K562 (cell line): ENCODE measurements at regions of chr11 and their contacts with region 1.

Region 1: DNA sequence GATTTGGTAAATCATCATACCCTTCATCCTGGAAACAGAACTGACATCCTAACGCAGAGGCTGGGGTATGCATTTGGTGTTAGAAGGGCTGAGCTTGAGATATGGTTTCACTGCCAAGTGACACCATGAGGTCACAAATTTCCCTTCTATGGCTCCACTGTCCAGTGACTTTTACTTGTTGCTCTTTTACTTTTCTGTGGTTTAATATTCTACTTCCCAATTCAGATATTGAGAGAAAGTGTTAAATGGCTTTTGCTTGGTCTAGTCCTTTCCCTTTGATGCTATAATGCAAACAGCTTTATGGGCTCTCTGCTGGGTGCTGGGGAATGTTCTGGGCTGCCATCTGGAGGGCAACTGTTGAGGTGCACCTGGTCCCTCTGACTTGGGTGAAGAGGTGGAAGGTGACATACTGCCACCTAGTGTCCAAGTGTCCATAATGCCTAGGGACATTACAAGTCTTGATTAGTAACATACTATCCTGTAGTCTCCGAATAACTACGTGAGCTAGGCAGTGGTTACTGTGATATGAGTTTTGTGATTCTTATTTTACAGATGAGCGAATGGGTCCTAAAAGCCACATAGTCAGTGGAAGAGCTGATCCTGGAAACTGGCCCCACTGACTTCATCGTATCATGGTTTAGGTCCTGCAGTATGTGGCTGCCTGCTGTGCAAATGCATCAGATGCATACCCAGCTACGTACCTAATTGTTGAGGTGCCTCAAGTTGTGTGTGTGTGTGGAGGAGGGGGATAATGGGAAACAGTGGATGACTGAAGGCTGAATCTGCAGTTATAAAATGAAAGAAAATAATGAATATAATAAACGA is 149.1 kb upstream of the RAG2 start:
- DNase-seq: peak; percentile 78 to 90 (median 86)
- ATAC-seq: peak; percentile 100
- H3K4me3 ChIP-seq: no peak overlapping the region
- H3K27ac ChIP-seq: no peak overlapping the region
- H3K4me1 ChIP-seq: no peaks in the 10 kb centered on the region
- H3K27me3 ChIP-seq: no peaks in the 10 kb centered on the region
- CTCF ChIP-seq: peak; percentile 99 to 100 (median 99)
- EP300 ChIP-seq: no peak
- POLR2A ChIP-seq: no peak
- RAD21 ChIP-seq: peak; percentile 91 to 92

Region 2: GRCh38 chr11:36292311-36292722 is 454.8 kb before region 1 on chr11:
- CTCF ChIA-PET with region 1: interaction called, 8 read pairs
- POLR2A ChIA-PET with region 1: no interaction called
- in situ Hi-C with region 1: no loop called
- intact Hi-C with region 1: loop called (anchors 2 kb)
- DNase-seq: peak; percentile 33 to 64 (median 46)
- ATAC-seq: no peak
- H3K4me3 ChIP-seq: no peak overlapping the region
- H3K27ac ChIP-seq: no peak overlapping the region
- H3K4me1 ChIP-seq: peaks cover 0 to 2% of the 10 kb centered on the region in 2 experiments; a peak in 1 of 5 replicates
- H3K27me3 ChIP-seq: peaks cover 0 to 5% of the 10 kb centered on the region in 2 experiments; a peak in 4 of 5 replicates
- CTCF ChIP-seq: peak; percentile 46 to 71 (median 62); a peak in 5 of 6 replicates
- EP300 ChIP-seq: no peak
- POLR2A ChIP-seq: no peak
- RAD21 ChIP-seq: peak; percentile 84 to 91

Region 3: GRCh38 chr11:36306888-36307287 is 440.2 kb before region 1 on chr11:
- CTCF ChIA-PET with region 1: no interaction called
- POLR2A ChIA-PET with region 1: no interaction called
- in situ Hi-C with region 1: loop called (anchors 10 kb)
- intact Hi-C with region 1: no loop called
- DNase-seq: peak in 1 of 4 experiments; percentile 31
- ATAC-seq: 0 out of 3 replicates have a peak, but pooled peaks have one; percentile 31
- H3K4me3 ChIP-seq: no peak overlapping the region
- H3K27ac ChIP-seq: no peak overlapping the region
- H3K4me1 ChIP-seq: no peaks in the 10 kb centered on the region
- H3K27me3 ChIP-seq: no peaks in the 10 kb centered on the region
- CTCF ChIP-seq: peak; percentile 28 to 56 (median 36); a peak in 3 of 6 replicates
- EP300 ChIP-seq: no peak
- POLR2A ChIP-seq: no peak
- RAD21 ChIP-seq: peak; percentile 69

Region 4: GRCh38 chr11:36509694-36510566 is 237.2 kb before region 1 on chr11 and contains the start of gene TRAF6:
- CTCF ChIA-PET with region 1: no interaction called
- POLR2A ChIA-PET with region 1: no interaction called
- in situ Hi-C with region 1: no loop called
- intact Hi-C with region 1: loop called (anchors 10 kb)
- DNase-seq: peak; percentile 84 to 92 (median 86)
- ATAC-seq: peak; percentile 97
- H3K4me3 ChIP-seq: peak within 1 kb of the TSS; percentile 92
- H3K27ac ChIP-seq: peak within 1 kb of the TSS; percentile 92
- H3K4me1 ChIP-seq: peaks cover 0 to 4% of the 10 kb centered on the region in 2 experiments; a peak in 3 of 5 replicates
- H3K27me3 ChIP-seq: no peaks in the 10 kb centered on the region
- CTCF ChIP-seq: peak; percentile 80 to 92 (median 86)
- EP300 ChIP-seq: peak; percentile 42; the same call in 1 of the 2 replicates
- POLR2A ChIP-seq: peak; percentile 97
- RAD21 ChIP-seq: no peak; a peak in 2 of 4 replicates
- polyA plus RNA-seq, gene TRAF6: 2.0 to 4.2 TPM

Region 5: GRCh38 chr11:36564376-36565030 is 182.6 kb before region 1 on chr11:
- CTCF ChIA-PET with region 1: interaction called, 34 read pairs
- POLR2A ChIA-PET with region 1: no interaction called
- in situ Hi-C with region 1: loop called (anchors 5 kb)
- intact Hi-C with region 1: loop called (anchors 1 kb)
- DNase-seq: peak; percentile 18 to 61 (median 25)
- ATAC-seq: peak; percentile 84
- H3K4me3 ChIP-seq: no peak overlapping the region
- H3K27ac ChIP-seq: no peak overlapping the region
- H3K4me1 ChIP-seq: peaks cover 3 to 7% of the 10 kb centered on the region in 2 experiments; a peak in 3 of 5 replicates
- H3K27me3 ChIP-seq: no peaks in the 10 kb centered on the region
- CTCF ChIP-seq: peak; percentile 66 to 77 (median 68); a peak in 5 of 6 replicates
- EP300 ChIP-seq: no peak
- POLR2A ChIP-seq: no peak
- RAD21 ChIP-seq: peak; percentile 85 to 94

Region 6: DNA sequence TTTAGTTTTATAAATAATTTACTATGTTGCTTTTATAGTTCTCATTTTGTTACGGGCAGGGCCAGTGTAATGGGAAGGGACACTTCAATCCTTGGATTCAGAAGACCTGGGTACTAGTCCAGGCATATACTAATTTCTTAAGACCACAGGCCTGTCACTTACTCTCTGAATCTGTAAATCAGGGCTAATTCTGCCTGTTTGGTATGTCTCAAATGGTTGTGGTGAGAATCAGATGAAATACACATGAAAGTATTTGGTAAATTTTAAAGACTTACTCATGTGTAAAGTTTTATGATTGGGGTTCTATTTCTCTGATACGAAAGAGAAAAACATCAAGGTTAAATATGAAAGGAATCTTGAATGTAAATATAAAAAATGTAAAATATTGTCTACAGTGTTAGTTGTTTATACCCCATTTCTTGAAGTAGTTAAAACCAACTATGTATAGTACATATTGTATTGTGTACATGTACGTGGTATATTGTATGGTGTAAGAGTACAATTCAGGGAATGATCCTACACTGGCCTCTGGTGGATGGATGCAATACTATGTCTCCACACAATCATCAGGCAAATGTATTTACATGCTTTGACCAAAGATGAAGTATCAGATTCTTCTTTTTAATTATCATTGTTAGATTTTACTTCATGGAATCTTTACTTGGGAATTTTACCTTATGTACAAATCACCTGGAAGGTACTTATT is 124.5 kb before region 1 on chr11:
- CTCF ChIA-PET with region 1: no interaction called
- POLR2A ChIA-PET with region 1: no interaction called
- in situ Hi-C with region 1: no loop called
- intact Hi-C with region 1: loop called (anchors 5 kb)
- DNase-seq: peak; percentile 7 to 35 (median 16)
- ATAC-seq: peak; percentile 92
- H3K4me3 ChIP-seq: no peak overlapping the region
- H3K27ac ChIP-seq: no peak overlapping the region
- H3K4me1 ChIP-seq: peaks cover 0 to 17% of the 10 kb centered on the region in 2 experiments; a peak in 2 of 5 replicates
- H3K27me3 ChIP-seq: no peaks in the 10 kb centered on the region
- CTCF ChIP-seq: peak; percentile 37 to 88 (median 62); a peak in 5 of 6 replicates
- EP300 ChIP-seq: no peak
- POLR2A ChIP-seq: no peak
- RAD21 ChIP-seq: peak; percentile 94 to 97

Region 7: DNA sequence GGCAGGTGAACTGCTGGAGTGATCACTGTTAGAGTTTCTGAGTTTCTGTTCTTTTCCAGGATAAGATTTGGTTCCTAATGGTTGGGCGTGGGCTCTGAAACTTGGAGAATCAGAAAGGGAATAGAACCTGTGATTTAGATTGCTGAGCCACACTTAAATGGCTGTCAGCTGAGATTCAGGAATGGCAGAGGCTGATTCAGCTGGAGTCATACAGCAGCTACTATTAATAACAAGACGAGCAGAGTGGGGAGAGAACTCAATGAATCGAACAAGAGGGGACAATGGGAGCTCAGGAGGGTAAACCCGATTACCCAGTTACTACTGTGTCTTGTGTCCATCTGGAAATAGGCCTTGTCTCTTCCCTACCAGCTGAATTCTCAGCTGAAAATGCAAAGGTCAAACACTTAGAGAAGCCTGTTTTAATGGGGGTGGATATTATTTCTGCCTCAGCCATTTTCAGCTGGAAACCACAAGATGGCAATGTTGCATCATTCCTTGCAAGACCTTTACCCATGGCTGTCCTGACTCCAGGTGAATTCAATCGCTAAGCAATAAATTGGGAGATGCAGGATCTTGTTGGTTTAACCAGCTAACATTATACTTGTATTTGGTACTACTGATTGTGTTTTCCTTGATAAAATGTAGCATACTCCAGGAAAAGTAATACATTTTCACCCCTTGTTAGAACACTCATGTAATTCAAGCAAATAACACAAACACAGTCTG is 44.6 kb before region 1 on chr11:
- CTCF ChIA-PET with region 1: interaction called, 54 read pairs
- POLR2A ChIA-PET with region 1: no interaction called
- in situ Hi-C with region 1: loop called (anchors 5 kb)
- intact Hi-C with region 1: loop called (anchors 1 kb)
- DNase-seq: peak; percentile 41 to 64 (median 54)
- ATAC-seq: peak; percentile 94
- H3K4me3 ChIP-seq: no peak overlapping the region
- H3K27ac ChIP-seq: no peak overlapping the region
- H3K4me1 ChIP-seq: no peaks in the 10 kb centered on the region
- H3K27me3 ChIP-seq: peaks cover 0 to 5% of the 10 kb centered on the region in 2 experiments; a peak in 1 of 5 replicates
- CTCF ChIP-seq: peak; percentile 77 to 92 (median 78)
- EP300 ChIP-seq: no peak
- POLR2A ChIP-seq: no peak
- RAD21 ChIP-seq: peak; percentile 88 to 91